Naive thymus-derived CD4-positive, alpha-beta T cell (primary cell): ENCODE measurements at regions of chr3 and their contacts with region 1.

Region 1: GRCh38 chr3:158717576-158717975 is 14.7 kb downstream of the RARRES1 start:
- DNase-seq: no peak
- ATAC-seq: no peak
- H3K4me3 ChIP-seq: no peak overlapping the region
- H3K4me3 Mint-ChIP-seq: peak overlapping the region in 1 of 10 donors; percentile 43
- H3K27ac ChIP-seq: no peak overlapping the region
- H3K27ac Mint-ChIP-seq: peak overlapping the region in 3 of 9 donors; percentile 35 to 77 (median 63)
- H3K4me1 ChIP-seq: peaks cover 9 to 16% of the 10 kb centered on the region in 2 donors
- H3K4me1 Mint-ChIP-seq: peaks cover 19 to 41% (median 30%) of the 10 kb centered on the region in 7 donors
- H3K27me3 ChIP-seq: no peaks in the 10 kb centered on the region
- H3K27me3 Mint-ChIP-seq: no peaks in the 10 kb centered on the region

Region 2: DNA sequence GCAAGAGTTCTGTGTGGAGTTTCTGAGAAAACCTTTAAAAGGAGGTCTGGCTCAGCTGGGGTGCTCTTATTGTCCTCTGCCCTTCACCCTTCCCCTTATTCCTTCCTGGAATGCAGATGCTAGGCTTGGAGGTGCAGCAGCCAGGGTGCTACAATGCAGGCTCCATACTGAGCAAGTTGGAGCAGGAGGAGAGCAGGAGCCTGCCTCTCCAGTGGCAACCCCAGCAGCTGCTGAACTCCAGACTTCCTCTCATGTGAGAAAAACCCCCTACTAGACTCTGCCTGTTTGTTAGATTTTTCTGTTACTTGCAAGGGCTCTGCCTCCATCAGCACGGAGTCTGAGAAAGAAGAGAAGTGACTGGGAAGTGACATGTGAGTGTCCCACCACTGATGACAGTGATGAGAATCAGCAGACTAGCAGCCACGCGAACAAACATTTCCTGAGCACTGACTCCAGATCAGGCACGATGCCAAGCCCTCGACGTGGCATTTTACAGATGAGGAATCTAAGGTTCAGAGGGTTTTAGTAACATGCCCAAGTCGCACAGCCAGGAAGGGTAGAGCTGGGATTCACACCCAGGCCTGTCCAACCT is 30.8 kb after region 1 on chr3:
- CTCF ChIA-PET with region 1: no interaction called
- POLR2A ChIA-PET with region 1: no interaction called
- intact Hi-C with region 1: loop called in 1 of 2 experiments (anchors 1 kb)
- DNase-seq: no peak
- ATAC-seq: peak; percentile 54
- H3K4me3 ChIP-seq: no peak overlapping the region
- H3K4me3 Mint-ChIP-seq: no peak overlapping the region
- H3K27ac ChIP-seq: no peak overlapping the region
- H3K27ac Mint-ChIP-seq: no peak overlapping the region
- H3K4me1 ChIP-seq: no peaks in the 10 kb centered on the region
- H3K4me1 Mint-ChIP-seq: peaks cover 0 to 7% (median 2%) of the 10 kb centered on the region in 7 donors
- H3K27me3 ChIP-seq: no peaks in the 10 kb centered on the region
- H3K27me3 Mint-ChIP-seq: no peaks in the 10 kb centered on the region